Activated CD8-positive, alpha-beta T cell treated with anti-CD3 and anti-CD28 coated beads for 36 hours (primary cell): ENCODE measurements at regions of chr1 and their contacts with region 1.

Region 1: DNA sequence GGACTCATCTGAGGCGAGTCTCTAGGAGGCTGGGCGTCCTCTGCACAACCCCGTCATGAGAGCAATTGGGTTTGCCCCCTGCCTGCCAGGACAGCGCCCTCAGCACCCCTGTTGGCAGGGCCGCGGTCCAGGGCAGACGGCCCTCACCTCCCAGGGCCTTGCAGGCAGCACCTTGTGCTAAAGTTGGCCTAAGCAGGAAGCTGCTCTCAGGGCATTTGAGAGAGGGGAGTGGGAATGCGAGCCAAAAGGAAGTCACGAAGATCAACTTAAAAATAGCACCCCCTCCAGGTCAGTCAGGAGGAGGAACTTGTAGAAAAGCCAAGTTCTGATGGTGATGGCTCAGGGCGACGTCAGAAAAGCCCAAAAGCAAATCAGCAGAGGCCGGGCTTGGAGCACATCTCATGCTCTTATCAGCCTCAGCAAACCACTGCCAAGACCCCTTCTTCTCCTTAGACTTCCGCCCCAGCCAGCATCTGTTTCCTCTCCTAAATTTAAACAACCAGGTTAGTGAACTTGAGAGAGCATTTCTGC is 12.6 kb upstream of the ADORA3 start:
- DNase-seq: peak; percentile 82
- ATAC-seq: peak; percentile 62
- H3K4me3 Mint-ChIP-seq: peak overlapping the region; percentile 62
- H3K27ac Mint-ChIP-seq: peak overlapping the region; percentile 94
- H3K4me1 Mint-ChIP-seq: peaks cover 58% of the 10 kb centered on the region
- H3K27me3 Mint-ChIP-seq: no peaks in the 10 kb centered on the region
- CTCF ChIP-seq: peak; percentile 71

Region 2: DNA sequence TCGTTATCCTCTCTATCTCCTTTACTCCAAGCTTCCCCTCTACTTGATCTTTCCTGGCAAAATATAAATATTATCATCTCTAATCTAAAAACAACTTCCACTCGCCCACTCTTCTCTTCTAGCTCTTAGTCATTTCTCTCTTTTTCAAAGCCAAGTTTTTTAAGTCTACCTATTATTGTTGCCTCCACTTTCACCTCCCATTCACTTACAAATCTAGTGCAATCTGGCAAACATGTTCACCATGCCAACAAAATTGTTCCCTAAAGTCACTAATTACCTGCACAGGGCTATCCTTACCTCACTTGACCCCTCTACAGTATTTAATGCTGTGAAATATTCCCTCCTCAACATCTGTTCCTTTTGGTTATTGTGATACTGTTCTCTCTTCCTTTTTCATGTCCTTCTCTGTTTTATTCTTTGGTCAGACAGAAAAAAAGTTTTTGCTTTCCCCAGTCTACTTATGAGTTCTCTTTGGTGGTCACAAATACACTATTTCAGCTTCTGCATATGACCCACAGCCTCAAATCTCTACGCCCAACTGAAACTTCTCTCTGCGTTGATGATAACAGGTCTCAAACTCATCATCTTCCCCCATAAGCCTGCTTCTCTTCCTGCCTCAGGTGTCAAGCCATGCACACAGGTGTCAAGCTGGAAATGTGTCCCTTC is 71.6 kb after region 1 on chr1:
- CTCF ChIA-PET with region 1: interaction called, 33 read pairs
- POLR2A ChIA-PET with region 1: interaction called, 16 read pairs
- intact Hi-C with region 1: loop called (anchors 2 kb)
- DNase-seq: no peak
- ATAC-seq: peak; percentile 38
- H3K4me3 Mint-ChIP-seq: no peak overlapping the region
- H3K27ac Mint-ChIP-seq: no peak overlapping the region
- H3K4me1 Mint-ChIP-seq: peaks cover 29% of the 10 kb centered on the region
- H3K27me3 Mint-ChIP-seq: no peaks in the 10 kb centered on the region
- CTCF ChIP-seq: no peak

Region 3: GRCh38 chr1:111592389-111593361 is 76.6 kb after region 1 on chr1:
- CTCF ChIA-PET with region 1: interaction called, 33 read pairs
- POLR2A ChIA-PET with region 1: interaction called, 16 read pairs
- intact Hi-C with region 1: loop called (anchors 2 kb)
- DNase-seq: peak; percentile 100
- ATAC-seq: peak; percentile 90
- H3K4me3 Mint-ChIP-seq: peak overlapping the region; percentile 57
- H3K27ac Mint-ChIP-seq: peak overlapping the region; percentile 91
- H3K4me1 Mint-ChIP-seq: peaks cover 76% of the 10 kb centered on the region
- H3K27me3 Mint-ChIP-seq: no peaks in the 10 kb centered on the region
- CTCF ChIP-seq: no peak

Region 4: GRCh38 chr1:111619635-111620440 is 103.8 kb after region 1 on chr1 and contains the start of gene RAP1A:
- CTCF ChIA-PET with region 1: interaction called, 20 read pairs
- POLR2A ChIA-PET with region 1: interaction called, 17 read pairs
- intact Hi-C with region 1: loop called (anchors 2 kb)
- DNase-seq: peak; percentile 97
- ATAC-seq: peak; percentile 79
- H3K4me3 Mint-ChIP-seq: peak within 1 kb of the TSS; percentile 99
- H3K27ac Mint-ChIP-seq: peak within 1 kb of the TSS; percentile 96
- H3K4me1 Mint-ChIP-seq: peaks cover 63% of the 10 kb centered on the region
- H3K27me3 Mint-ChIP-seq: no peaks in the 10 kb centered on the region
- CTCF ChIP-seq: no peak
- total RNA-seq, gene RAP1A: 197 to 198 TPM